Dendritic cell treated with granulocyte-macrophage colony-stimulating factor and Interleukin-4, amounts not matched to agents 40 ng/mL and 50 ng/mL, for 4 days (primary cell): ENCODE measurements at regions of chr15 and their contacts with region 1.

Region 1: GRCh38 chr15:76973362-76973743 is 21.6 kb upstream of the PSTPIP1 start:
- H3K4me3 Mint-ChIP-seq: no peak overlapping the region
- H3K27ac Mint-ChIP-seq: peak overlapping the region; percentile 26
- H3K4me1 Mint-ChIP-seq: peaks cover 37% of the 10 kb centered on the region
- H3K27me3 Mint-ChIP-seq: no peaks in the 10 kb centered on the region

Region 2: GRCh38 chr15:77024271-77025082 is 51.1 kb after region 1 on chr15:
- intact Hi-C with region 1: loop called (anchors 2 kb)
- H3K4me3 Mint-ChIP-seq: no peak overlapping the region
- H3K27ac Mint-ChIP-seq: peak overlapping the region; percentile 4
- H3K4me1 Mint-ChIP-seq: peaks cover 59% of the 10 kb centered on the region
- H3K27me3 Mint-ChIP-seq: no peaks in the 10 kb centered on the region

Region 3: DNA sequence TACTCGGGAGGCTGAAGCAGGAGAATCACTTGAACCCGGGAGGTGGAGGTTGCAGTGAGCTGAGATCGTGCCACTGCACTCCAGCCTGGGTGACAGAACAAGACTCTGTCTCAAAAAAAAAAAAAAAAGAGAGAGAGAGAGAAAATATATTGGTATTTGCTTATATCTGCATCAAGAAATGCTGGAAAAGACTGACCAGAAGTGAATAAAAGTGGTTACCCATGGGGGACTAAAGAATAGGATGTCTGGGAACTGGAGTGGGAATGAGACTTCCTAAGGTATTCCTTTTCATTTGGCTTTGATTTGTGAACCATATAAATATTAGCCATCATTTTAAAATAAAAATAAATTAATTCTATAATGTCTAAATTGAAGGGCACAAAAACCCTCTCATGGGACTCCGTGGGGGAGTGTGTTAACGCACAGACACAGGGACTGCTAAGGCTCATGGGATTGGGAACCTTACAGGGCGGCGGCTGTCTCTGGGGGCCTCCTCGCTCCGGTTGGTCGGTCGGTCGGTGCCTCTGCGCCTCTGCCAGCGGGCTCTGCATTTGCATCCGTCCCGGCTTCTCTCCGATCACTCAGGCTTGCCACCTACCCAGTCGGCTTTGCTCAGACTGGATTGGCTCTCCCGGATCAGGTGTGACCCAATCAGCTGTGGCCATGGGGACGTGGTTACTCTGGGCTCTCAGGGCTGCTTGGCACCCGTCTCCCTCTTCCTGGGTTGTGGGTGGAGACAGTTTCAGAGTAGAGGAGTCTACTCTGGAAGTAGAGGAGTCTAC is 110.2 kb after region 1 on chr15:
- intact Hi-C with region 1: loop called (anchors 10 kb)
- H3K4me3 Mint-ChIP-seq: peak overlapping the region; percentile 74
- H3K27ac Mint-ChIP-seq: peak overlapping the region; percentile 76
- H3K4me1 Mint-ChIP-seq: peaks cover 47% of the 10 kb centered on the region
- H3K27me3 Mint-ChIP-seq: peaks cover 2% of the 10 kb centered on the region

Region 4: DNA sequence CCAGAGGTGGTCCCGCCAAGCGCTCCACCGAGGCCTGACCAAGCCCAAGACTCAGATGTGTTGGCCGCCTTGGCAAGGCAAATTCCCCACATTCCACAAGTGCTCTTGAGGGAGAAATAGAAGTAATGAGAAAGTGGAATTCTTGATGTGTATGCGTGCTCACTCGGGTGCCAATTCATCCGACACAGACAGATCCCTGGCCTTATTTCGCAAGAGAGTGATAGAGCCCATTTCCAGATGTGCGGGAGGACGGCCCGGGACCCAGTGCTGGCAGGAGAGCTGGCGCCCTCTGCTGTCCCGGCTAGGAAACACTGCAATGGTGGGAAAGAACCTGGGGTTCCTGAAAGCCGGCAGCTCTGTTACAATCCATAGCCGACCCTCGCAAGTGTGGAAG is 523.4 kb after region 1 on chr15:
- intact Hi-C with region 1: loop called (anchors 1 kb)
- H3K4me3 Mint-ChIP-seq: no peak overlapping the region
- H3K27ac Mint-ChIP-seq: no peak overlapping the region
- H3K4me1 Mint-ChIP-seq: peaks cover 25% of the 10 kb centered on the region
- H3K27me3 Mint-ChIP-seq: peaks cover 7% of the 10 kb centered on the region